Ovary (tissue), 10 donors: ENCODE measurements at regions of chr10 and their contacts with region 1.

Region 1: DNA sequence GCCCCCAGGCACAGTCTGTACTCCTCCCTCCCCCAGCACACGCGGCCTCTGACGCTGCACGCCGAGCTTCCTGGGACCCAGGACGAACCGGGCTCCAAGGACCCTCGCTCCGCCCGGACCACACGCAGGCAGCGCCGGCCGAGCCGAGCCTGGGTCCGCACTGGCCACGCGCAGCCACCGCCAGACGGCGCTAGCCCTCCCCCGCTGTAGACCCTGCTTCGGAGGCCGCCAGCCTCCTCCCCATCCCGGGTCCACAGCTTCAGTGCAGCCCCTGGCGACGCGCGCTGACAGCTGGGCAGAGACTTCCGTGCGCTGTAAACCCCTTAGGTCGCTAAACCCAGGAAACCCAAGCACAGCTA is 936 bp upstream of the TCERG1L start:
- DNase-seq: peak; percentile 48 to 76 (median 65)
- H3K4me3 ChIP-seq: peak overlapping the region; percentile 21
- H3K27ac ChIP-seq: no peak overlapping the region
- H3K4me1 ChIP-seq: peaks cover 6% of the 10 kb centered on the region
- H3K27me3 ChIP-seq: no peaks in the 10 kb centered on the region
- CTCF ChIP-seq: peak; percentile 38 to 71 (median 55)
- EP300 ChIP-seq: no peak
- POLR2A ChIP-seq: no peak

Region 2: GRCh38 chr10:130190055-130190736 is 1122.3 kb before region 1 on chr10:
- intact Hi-C with region 1: loop called in 1 of 4 experiments (anchors 10 kb)
- DNase-seq: peak; percentile 86 to 94 (median 94)
- H3K4me3 ChIP-seq: peak overlapping the region; percentile 43
- H3K27ac ChIP-seq: peak overlapping the region in 1 of 2 donors; percentile 45
- H3K4me1 ChIP-seq: peaks cover 6% of the 10 kb centered on the region
- H3K27me3 ChIP-seq: no peaks in the 10 kb centered on the region
- CTCF ChIP-seq: peak; percentile 98 to 100 (median 99)
- EP300 ChIP-seq: no peak
- POLR2A ChIP-seq: no peak

Region 3: GRCh38 chr10:131021246-131021895 is 291.1 kb before region 1 on chr10:
- intact Hi-C with region 1: no loop called
- DNase-seq: no peak
- H3K4me3 ChIP-seq: no peak overlapping the region
- H3K27ac ChIP-seq: no peak overlapping the region
- H3K4me1 ChIP-seq: no peaks in the 10 kb centered on the region
- H3K27me3 ChIP-seq: no peaks in the 10 kb centered on the region
- CTCF ChIP-seq: no peak
- EP300 ChIP-seq: no peak
- POLR2A ChIP-seq: no peak

Region 4: DNA sequence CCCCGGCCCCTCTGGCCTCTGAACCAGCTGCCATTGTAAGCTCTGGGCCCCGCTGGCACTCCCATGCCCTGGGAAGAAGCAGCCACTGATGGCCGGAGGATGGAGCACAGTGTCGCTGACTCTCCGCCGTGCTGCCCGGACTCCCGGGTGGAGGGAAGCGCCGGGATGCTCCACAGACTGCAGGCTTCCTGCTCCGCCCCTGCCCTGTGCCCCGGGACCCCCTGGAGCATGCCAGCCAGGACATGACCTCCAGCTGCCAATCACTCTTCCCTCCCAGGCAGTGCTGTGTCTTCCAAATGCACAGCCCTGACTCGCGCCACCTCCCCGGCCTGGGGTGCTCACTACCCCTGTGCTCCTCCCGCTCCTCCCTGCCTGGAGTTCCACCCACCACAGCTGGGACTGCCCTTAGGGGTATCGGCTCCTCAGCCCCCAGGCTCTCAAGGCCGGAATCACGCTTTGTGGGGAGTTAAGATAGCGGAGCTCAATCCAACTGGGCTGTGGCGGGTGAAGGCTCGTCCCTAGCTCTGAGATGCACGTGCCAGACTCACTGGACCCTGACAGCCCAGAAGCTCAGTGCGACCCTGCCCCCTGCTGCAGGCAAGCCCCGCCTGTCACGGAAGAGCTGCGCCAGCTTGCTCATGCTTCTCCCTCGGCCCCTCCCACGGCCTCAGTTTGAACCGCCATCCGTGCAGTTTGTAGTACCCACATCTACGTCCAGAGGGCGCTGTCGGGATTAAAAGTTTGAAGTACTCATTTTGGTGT is 141.3 kb after region 1 on chr10:
- intact Hi-C with region 1: loop called in 1 of 4 experiments (anchors 5 kb)
- DNase-seq: peak; percentile 84 to 92 (median 92)
- H3K4me3 ChIP-seq: no peak overlapping the region
- H3K27ac ChIP-seq: peak overlapping the region; percentile 72 to 75
- H3K4me1 ChIP-seq: peaks cover 8% of the 10 kb centered on the region
- H3K27me3 ChIP-seq: no peaks in the 10 kb centered on the region
- CTCF ChIP-seq: peak; percentile 76 to 85 (median 81)
- EP300 ChIP-seq: no peak
- POLR2A ChIP-seq: no peak

Region 5: DNA sequence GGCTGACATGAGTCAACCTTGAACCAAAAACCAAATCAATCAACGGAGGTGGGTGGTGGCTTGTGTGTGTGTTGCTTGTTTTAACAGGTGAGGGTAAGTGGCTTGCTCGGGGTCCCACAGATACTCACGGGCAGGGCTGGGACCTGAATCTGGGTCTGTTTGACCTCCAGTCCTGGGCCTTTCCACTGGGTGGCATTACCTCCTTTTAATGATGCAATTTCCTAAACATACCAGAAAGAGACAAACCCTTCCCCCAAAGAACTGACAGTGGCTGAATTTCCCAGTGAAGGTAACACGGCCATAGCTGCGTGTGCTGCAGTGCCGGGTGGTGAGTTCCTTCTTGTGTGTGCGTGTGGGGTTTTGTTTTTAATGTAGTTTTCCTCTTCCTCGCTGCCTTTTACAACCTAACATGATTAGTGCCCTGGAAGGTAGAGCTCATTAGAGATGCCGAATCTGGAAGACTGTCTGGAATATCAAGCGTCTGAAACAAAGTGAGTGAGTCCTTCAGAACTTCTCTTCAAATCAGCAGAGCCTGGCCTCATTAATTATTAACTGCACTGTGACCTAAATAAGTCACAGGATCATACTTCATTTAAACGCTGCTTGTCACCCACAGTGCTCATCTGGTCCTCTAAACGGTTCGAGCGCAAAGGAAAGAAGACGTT is 165.1 kb after region 1 on chr10:
- intact Hi-C with region 1: loop called in 1 of 4 experiments (anchors 10 kb)
- DNase-seq: no peak
- H3K4me3 ChIP-seq: no peak overlapping the region
- H3K27ac ChIP-seq: no peak overlapping the region
- H3K4me1 ChIP-seq: no peaks in the 10 kb centered on the region
- H3K27me3 ChIP-seq: no peaks in the 10 kb centered on the region
- CTCF ChIP-seq: no peak
- EP300 ChIP-seq: no peak
- POLR2A ChIP-seq: no peak